BJ (cell line): ENCODE measurements at regions of chr20 and their contacts with region 1.

Region 1: GRCh38 chr20:38221119-38221589 is 39.4 kb downstream of the KIAA1755 start:
- DNase-seq: no peak
- H3K4me3 ChIP-seq: no peak overlapping the region
- H3K27me3 ChIP-seq: no peaks in the 10 kb centered on the region
- CTCF ChIP-seq: peak; percentile 96

Region 2: GRCh38 chr20:38057351-38057972 is 163.7 kb before region 1 on chr20:
- CTCF ChIA-PET with region 1: interaction called, 482 read pairs
- POLR2A ChIA-PET with region 1: no interaction called
- DNase-seq: no peak
- H3K4me3 ChIP-seq: no peak overlapping the region
- H3K27me3 ChIP-seq: no peaks in the 10 kb centered on the region
- CTCF ChIP-seq: peak; percentile 79

Region 3: DNA sequence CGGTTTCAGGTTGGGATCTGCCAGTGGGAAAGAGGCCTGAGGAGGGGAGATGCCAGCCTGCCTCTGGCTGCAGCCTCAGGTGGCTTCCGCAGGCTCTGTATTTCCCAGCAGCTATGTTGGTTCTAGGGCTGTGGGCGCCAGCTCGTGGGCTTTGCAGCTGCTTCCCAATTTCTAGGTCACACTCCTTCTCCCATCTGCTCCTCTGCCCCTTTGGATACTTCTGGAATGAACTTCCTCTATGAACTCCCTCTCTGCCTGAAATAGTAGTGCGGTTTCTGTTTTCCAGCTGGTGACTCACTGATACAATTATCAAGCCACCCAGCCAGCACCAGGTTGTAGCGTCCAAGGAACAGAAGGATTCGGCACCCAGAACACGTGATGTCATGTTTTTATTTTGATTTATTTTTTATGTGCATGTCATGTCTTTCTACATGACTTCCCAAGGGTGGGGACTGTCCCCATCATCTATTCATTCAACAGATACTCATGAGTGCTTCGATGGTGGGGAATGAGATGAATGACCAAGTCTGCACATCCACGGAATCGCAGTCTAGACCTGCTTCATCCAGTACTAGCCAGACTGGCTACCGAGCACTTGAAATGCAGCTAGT is 94.0 kb before region 1 on chr20:
- CTCF ChIA-PET with region 1: interaction called, 11 read pairs
- POLR2A ChIA-PET with region 1: no interaction called
- DNase-seq: no peak
- H3K4me3 ChIP-seq: no peak overlapping the region
- H3K27me3 ChIP-seq: no peaks in the 10 kb centered on the region
- CTCF ChIP-seq: no peak

Region 4: DNA sequence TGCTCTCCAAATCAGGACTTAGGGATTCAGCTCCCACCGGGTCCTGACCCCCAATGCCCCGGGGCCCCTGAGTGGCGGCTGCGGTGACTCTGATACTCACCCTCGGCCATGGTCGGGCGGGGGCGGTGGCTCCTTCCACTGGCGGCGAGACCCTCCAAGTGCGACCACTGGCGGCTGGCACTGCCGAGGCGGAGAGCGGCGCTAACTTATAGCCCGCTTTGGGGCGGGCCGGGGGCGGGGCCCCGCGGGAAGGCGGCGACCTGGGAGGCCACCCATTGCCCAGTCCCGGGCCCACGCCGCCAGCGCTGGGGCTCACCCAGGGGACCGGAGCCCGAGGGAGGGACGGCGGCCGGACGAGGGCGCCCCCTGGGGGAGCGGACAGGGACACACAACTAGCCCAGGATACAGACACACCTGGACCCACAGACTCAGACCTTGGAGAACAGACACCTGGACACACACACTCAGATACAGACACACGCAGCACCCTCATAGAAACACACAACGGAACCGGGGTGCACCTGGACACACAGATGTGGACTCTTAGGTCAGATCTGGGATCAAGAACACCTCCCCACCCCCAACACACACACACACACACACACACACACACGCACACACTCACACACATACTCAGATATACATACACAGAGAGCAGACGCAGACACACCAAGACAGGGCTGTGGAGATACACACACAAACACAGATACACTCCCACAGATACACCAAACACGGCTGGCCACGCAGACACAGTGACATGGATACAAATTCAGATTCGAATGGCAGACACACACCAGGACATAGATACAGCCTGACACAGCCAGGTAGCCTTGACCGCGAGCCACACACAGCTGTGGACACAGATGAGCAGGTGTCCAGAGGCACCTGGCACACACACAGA is 55.8 kb before region 1 on chr20 and contains the start of gene TGM2:
- CTCF ChIA-PET with region 1: interaction called, 223 read pairs
- POLR2A ChIA-PET with region 1: no interaction called
- DNase-seq: no peak
- H3K4me3 ChIP-seq: peak within 1 kb of the TSS; percentile 50
- H3K27me3 ChIP-seq: no peaks in the 10 kb centered on the region
- CTCF ChIP-seq: peak; percentile 77
- polyA plus RNA-seq, gene TGM2: 313 and 397 TPM in 2 replicates

Region 5: GRCh38 chr20:38210741-38211140 is 10.4 kb before region 1 on chr20:
- CTCF ChIA-PET with region 1: interaction called, 16 read pairs
- POLR2A ChIA-PET with region 1: no interaction called
- DNase-seq: no peak
- H3K4me3 ChIP-seq: no peak overlapping the region
- H3K27me3 ChIP-seq: no peaks in the 10 kb centered on the region
- CTCF ChIP-seq: no peak

Region 6: DNA sequence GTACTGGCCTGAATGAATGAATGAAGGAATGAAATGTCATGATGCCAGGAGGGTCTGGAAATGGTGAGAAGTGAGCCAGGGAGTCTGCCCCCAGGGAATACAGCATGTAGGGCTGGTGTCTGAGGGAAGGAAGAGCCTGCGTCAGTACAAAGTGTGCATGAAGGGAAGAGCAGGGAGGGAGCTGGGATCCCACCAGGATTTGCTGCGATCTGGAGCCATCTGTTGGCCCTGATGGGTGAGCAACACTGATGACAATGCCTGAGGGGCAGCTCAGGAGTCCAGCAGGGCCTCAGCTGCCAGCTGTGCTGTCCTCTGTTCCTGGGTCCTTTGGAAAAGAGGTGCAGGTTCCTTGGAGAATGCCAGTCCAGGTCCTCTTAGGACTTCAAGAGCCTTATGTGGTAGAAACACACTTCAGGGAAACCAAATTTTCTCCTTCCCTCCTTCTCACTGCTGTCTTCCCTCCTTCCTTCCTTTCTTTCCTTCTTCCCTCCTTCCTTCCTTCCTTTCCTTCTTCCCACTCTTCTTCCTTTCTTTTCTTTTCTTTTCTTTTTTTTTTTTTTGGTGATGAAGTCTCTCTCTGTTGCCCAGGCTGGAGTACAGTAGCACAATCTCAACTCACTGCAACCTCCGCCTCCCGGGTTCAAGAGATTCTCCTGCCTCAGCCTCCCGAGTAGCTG is 94.3 kb after region 1 on chr20:
- CTCF ChIA-PET with region 1: interaction called, 48 read pairs
- POLR2A ChIA-PET with region 1: no interaction called
- DNase-seq: no peak
- H3K4me3 ChIP-seq: no peak overlapping the region
- H3K27me3 ChIP-seq: peaks cover 9% of the 10 kb centered on the region
- CTCF ChIP-seq: peak; percentile 41

Region 7: GRCh38 chr20:38730989-38731737 is 510.0 kb after region 1 on chr20:
- CTCF ChIA-PET with region 1: no interaction called
- POLR2A ChIA-PET with region 1: no interaction called
- DNase-seq: no peak
- H3K4me3 ChIP-seq: no peak overlapping the region
- H3K27me3 ChIP-seq: peaks cover 56% of the 10 kb centered on the region
- CTCF ChIP-seq: peak; percentile 97